PC-9 (cell line): ENCODE measurements at regions of chr20 and their contacts with region 1.

Region 1: DNA sequence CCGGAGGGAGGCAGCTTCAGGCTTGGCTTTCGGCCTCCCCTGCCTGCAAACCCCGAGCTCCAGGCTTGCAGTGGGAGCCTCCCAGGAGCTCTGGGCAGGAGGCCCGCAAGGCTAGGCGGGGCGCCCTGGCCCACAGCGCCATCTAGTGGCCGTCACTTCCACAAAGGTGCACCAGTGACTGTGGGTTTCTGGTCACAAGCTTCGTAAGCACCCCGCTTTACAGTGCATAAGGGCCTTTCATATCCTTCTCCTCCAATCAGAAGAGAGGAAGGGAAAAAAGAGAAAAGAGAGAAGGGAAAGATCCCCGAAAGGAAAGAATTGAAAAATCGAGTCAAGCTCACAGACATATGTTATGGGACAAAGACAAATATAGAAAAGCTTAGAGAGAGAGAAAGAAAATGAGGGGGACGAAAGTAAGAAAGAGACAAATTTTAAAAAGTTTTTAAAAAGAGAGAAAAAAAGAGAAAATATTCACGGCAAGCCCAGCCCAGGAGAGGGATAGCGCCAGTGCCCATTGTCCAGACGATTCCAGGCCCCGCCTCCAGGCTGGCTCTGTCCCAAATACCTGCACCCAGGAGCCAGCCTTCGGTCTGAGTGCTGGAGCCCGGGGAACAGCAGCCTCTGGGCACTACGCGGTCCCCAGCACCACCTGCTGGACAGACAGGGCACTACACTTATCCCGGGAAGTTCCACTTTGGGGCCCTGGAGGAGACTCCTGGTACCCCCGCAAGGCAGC is 207.1 kb downstream of the PREX1 start:
- DNase-seq: peak; percentile 95 to 96
- H3K4me3 ChIP-seq: peak overlapping the region; percentile 54
- H3K27ac ChIP-seq: peak overlapping the region; percentile 94
- H3K4me1 ChIP-seq: peaks cover 38% of the 10 kb centered on the region
- H3K27me3 ChIP-seq: no peaks in the 10 kb centered on the region
- CTCF ChIP-seq: peak; percentile 90

Region 2: GRCh38 chr20:47663333-47664067 is 957.2 kb before region 1 on chr20:
- CTCF ChIA-PET with region 1: interaction called, 5 read pairs
- POLR2A ChIA-PET with region 1: no interaction called
- intact Hi-C with region 1: loop called (anchors 1 kb)
- DNase-seq: peak; percentile 73 to 87
- H3K4me3 ChIP-seq: no peak overlapping the region
- H3K27ac ChIP-seq: 0 out of 2 replicates have a peak overlapping the region, but pooled peaks have one; percentile 6
- H3K4me1 ChIP-seq: no peaks in the 10 kb centered on the region
- H3K27me3 ChIP-seq: no peaks in the 10 kb centered on the region
- CTCF ChIP-seq: peak; percentile 98

Region 3: DNA sequence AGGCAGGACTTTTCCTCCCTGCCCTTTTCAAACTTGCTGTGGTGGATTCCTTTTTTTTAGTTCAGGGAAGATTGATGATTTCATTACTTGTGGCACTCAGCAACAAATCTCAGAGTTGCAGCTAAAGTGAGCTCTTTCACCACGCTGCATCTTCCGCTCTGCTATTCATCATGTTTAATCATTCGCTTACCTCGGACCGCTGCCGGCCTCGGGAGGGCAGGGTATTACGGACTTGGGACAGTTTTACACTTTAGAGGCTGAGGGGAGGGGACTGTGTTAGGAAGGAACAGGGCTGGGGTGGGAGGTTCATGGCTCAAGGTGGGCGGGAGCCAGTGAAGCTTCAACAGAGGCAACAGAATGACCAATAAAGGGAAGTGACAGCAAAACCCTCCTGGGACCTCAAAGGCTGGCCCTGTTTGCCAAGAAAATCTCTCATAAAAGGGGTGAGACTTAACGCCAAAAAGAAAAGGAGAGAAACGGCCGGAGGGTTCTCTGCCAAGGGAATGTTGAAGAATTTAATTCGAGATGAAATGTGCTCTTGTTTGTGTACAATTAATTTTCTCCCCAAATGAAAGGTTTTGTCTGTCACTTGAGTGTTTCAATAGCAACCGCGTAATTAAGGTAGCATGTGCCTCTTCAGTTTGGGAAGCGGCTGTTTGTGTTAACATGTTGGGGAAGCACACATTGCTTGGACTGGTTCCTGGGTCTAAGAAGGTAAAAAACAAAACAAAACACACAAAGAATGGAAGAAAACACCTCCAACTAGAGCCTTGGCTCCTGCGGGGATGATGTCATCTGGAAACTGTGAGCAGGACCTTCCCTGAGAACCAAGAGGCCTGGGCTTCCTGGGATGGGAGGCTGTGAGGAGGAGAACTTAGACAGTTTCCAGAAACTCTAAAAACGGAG is 762.9 kb before region 1 on chr20:
- CTCF ChIA-PET with region 1: interaction called, 6 read pairs
- POLR2A ChIA-PET with region 1: interaction called, 5 read pairs
- intact Hi-C with region 1: loop called (anchors 1 kb)
- DNase-seq: peak; percentile 70 to 76
- H3K4me3 ChIP-seq: peak overlapping the region; percentile 46
- H3K27ac ChIP-seq: peak overlapping the region; percentile 99
- H3K4me1 ChIP-seq: peaks cover 56% of the 10 kb centered on the region
- H3K27me3 ChIP-seq: no peaks in the 10 kb centered on the region
- CTCF ChIP-seq: 0 out of 2 replicates have a peak, but pooled peaks have one; percentile 14

Region 4: GRCh38 chr20:48065824-48066660 is 554.6 kb before region 1 on chr20:
- CTCF ChIA-PET with region 1: no interaction called
- POLR2A ChIA-PET with region 1: no interaction called
- intact Hi-C with region 1: loop called (anchors 5 kb)
- DNase-seq: peak; percentile 15 to 78
- H3K4me3 ChIP-seq: no peak overlapping the region
- H3K27ac ChIP-seq: peak overlapping the region; percentile 85
- H3K4me1 ChIP-seq: peaks cover 34% of the 10 kb centered on the region
- H3K27me3 ChIP-seq: no peaks in the 10 kb centered on the region
- CTCF ChIP-seq: no peak

Region 5: GRCh38 chr20:48295445-48295963 is 325.2 kb before region 1 on chr20:
- CTCF ChIA-PET with region 1: interaction called, 43 read pairs
- POLR2A ChIA-PET with region 1: interaction called, 32 read pairs
- intact Hi-C with region 1: loop called (anchors 1 kb)
- DNase-seq: peak; percentile 84 to 99
- H3K4me3 ChIP-seq: no peak overlapping the region
- H3K27ac ChIP-seq: peak overlapping the region; percentile 87
- H3K4me1 ChIP-seq: peaks cover 59% of the 10 kb centered on the region
- H3K27me3 ChIP-seq: no peaks in the 10 kb centered on the region
- CTCF ChIP-seq: peak; percentile 76

Region 6: DNA sequence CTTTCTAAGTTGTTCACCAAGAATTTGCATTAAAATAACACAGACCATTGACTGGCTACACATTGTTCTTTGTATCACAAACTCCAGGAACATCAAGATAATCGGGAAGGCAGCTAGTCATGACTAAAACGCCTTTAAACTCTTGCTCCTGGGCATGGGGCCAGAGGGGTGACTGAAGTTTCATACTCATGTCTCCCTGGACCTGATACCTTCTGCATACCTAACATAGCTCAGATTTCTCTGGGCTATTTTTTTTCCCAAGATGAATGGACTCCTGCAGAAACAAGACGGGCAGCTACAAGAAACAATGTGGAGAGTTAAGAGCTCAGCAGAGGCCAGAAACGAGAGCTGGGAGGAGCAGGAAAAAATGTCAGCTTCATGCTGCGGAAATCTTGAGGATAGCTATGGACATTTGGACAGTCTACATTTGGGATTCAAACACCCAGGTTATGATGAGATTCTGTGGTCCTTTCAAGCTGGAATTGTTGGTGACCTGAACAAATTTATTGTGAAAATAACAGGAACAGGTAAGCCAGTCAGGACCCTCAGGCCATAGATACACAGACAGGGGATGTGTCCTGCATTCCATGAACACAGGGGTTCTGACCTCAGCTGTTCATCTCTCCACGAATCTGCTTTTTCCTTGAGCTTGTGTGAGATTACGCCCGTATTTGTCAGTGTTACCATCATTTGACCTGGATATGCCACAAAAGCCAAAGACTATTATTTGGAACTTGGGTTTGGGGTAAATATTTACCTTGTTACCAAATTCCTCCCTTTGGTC is 82.1 kb before region 1 on chr20:
- CTCF ChIA-PET with region 1: interaction called, 31 read pairs
- POLR2A ChIA-PET with region 1: interaction called, 7 read pairs
- intact Hi-C with region 1: loop called (anchors 1 kb)
- DNase-seq: peak; percentile 94 to 99
- H3K4me3 ChIP-seq: peak overlapping the region; percentile 7; the same call in 1 of the 2 replicates
- H3K27ac ChIP-seq: peak overlapping the region; percentile 84
- H3K4me1 ChIP-seq: peaks cover 47% of the 10 kb centered on the region
- H3K27me3 ChIP-seq: no peaks in the 10 kb centered on the region
- CTCF ChIP-seq: no peak

Region 7: GRCh38 chr20:48568143-48568919 is 52.4 kb before region 1 on chr20:
- CTCF ChIA-PET with region 1: no interaction called
- POLR2A ChIA-PET with region 1: no interaction called
- intact Hi-C with region 1: no loop called
- DNase-seq: no peak
- H3K4me3 ChIP-seq: no peak overlapping the region
- H3K27ac ChIP-seq: no peak overlapping the region
- H3K4me1 ChIP-seq: 0 out of 2 replicates have a peak, but pooled peaks cover 4% of the 10 kb centered on the region
- H3K27me3 ChIP-seq: no peaks in the 10 kb centered on the region
- CTCF ChIP-seq: no peak